ENCODE measurements at regions of chr18 and their contacts with region 1.

Region 1: DNA sequence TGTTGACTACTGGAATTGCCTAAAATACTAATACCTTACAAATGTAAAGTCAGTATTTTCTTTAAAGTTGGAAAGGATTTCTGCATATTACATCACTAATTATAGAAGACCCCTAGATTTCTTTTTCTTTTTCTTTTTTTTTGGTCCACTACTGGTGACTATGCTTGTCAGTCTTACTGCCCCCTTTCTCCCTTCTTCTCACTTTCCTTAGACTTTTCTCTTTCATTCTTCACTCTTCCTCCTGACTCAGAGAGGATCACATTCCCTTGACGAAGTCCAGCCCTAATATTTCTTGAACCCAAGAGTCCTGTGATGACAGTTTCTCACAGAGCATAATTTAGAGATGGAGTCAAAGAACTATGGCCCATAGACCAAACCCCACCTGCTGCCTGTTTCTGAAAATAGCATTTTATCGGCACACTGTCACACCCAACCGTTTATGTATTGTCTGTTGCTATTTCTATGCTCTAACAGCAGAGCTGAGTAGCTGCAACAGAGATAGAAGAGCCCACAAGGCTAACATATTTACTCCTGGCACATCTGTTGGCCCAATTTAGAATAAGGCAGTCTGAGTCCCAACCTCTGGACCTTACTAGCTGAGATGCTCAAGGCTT is 40.6 kb upstream of the RIOK3 start:
- DNase-seq: no peak
- ATAC-seq: no peak
- H3K4me3 ChIP-seq: no peak overlapping the region
- H3K27ac ChIP-seq: no peak overlapping the region
- H3K4me1 ChIP-seq: no peaks in the 10 kb centered on the region
- H3K27me3 ChIP-seq: no peaks in the 10 kb centered on the region
- CTCF ChIP-seq: no peak

Region 2: DNA sequence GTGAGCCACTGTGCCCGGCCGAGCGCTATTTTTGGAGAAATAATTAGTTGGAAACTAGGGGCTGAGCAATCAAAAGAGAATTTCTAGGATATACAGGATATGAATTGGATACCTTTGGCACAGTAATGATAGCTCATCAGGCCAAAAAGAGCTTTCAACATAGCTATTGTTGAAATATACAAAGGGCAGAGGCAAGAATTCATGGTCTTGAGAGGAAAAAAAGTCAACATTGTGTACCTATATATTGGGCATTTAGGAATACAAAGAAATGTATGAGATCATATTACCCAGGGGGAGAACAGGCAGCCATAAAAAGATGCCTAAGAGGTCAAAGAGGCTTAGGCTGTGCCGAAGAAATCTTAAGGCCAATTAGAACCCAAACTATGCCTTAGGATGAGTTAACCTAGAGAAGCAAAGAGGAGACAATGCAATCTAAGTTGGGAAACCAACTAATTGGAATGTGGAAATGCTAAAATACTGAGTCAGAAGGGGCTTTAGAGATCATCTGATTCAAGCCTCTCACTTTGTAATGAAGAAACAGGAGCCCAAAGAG is 380.4 kb before region 1 on chr18:
- CTCF ChIA-PET with region 1: interaction called, 3 read pairs
- POLR2A ChIA-PET with region 1: no interaction called
- intact Hi-C with region 1: loop called (anchors 5 kb)
- DNase-seq: peak; percentile 52
- ATAC-seq: no peak; the same call in 1 of the 2 replicates
- H3K4me3 ChIP-seq: no peak overlapping the region
- H3K27ac ChIP-seq: peak overlapping the region; percentile 23
- H3K4me1 ChIP-seq: peaks cover 17% of the 10 kb centered on the region
- H3K27me3 ChIP-seq: no peaks in the 10 kb centered on the region
- CTCF ChIP-seq: no peak

Region 3: DNA sequence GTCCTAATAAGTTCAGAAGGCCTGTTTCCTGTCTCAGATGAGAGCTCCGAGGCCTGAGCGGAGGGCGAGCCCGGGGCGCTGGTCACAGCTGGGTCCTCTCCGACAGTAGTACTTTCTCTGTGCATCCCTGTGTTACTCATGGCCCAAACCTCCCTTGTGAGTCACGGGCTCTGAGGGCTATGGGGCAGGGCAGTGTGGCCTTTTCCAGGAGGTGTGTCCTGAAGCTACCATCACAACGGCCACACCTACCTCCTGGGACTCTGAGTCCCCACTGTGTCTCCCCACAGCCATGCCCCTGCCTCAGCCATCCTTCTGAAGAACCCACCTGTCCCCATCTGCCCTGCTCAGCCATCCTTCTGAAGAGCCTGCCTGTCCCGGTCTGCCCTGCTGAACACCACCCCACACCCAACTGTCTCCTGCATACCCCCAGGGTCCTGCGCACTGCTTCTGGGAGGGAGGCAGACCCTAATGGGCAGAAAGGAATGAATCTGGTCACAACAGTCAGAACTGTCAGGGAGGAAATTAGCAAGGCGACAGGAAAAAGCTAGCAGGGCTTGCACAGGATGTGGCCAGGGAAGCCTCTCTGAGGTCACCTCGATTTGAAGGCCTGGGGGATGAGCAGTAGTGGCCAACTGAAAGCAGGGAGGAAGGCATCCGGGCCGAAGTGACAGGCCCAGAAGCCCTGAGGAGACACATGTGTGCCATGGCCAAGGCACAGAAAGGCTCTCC is 104.7 kb before region 1 on chr18:
- CTCF ChIA-PET with region 1: no interaction called
- POLR2A ChIA-PET with region 1: no interaction called
- intact Hi-C with region 1: no loop called
- DNase-seq: peak; percentile 32
- ATAC-seq: peak; percentile 16; the same call in 1 of the 2 replicates
- H3K4me3 ChIP-seq: no peak overlapping the region
- H3K27ac ChIP-seq: no peak overlapping the region
- H3K4me1 ChIP-seq: peaks cover 28% of the 10 kb centered on the region
- H3K27me3 ChIP-seq: no peaks in the 10 kb centered on the region
- CTCF ChIP-seq: no peak

Region 4: GRCh38 chr18:23377669-23378301 is 34.7 kb before region 1 on chr18:
- CTCF ChIA-PET with region 1: interaction called, 5 read pairs
- POLR2A ChIA-PET with region 1: no interaction called
- intact Hi-C with region 1: loop called (anchors 5 kb)
- DNase-seq: peak; percentile 89
- ATAC-seq: peak; percentile 65
- H3K4me3 ChIP-seq: peak overlapping the region; percentile 29; the same call in 1 of the 2 replicates
- H3K27ac ChIP-seq: peak overlapping the region; percentile 86
- H3K4me1 ChIP-seq: peaks cover 38% of the 10 kb centered on the region
- H3K27me3 ChIP-seq: no peaks in the 10 kb centered on the region
- CTCF ChIP-seq: no peak

Region 5: GRCh38 chr18:23503038-23503962 is 90.8 kb after region 1 on chr18 and contains the start of gene RMC1:
- CTCF ChIA-PET with region 1: no interaction called
- POLR2A ChIA-PET with region 1: no interaction called
- intact Hi-C with region 1: no loop called
- DNase-seq: peak; percentile 93
- ATAC-seq: peak; percentile 78
- H3K4me3 ChIP-seq: peak within 1 kb of the TSS; percentile 85
- H3K27ac ChIP-seq: peak within 1 kb of the TSS; percentile 44
- H3K4me1 ChIP-seq: peaks cover 20% of the 10 kb centered on the region; the same call in 1 of the 2 replicates
- H3K27me3 ChIP-seq: no peaks in the 10 kb centered on the region
- CTCF ChIP-seq: no peak
- total RNA-seq, gene RMC1: 23.2 and 27.6 TPM in 2 replicates

Region 6: GRCh38 chr18:23943104-23943503 is 530.6 kb after region 1 on chr18:
- CTCF ChIA-PET with region 1: no interaction called
- POLR2A ChIA-PET with region 1: no interaction called
- intact Hi-C with region 1: no loop called
- DNase-seq: no peak
- ATAC-seq: no peak
- H3K4me3 ChIP-seq: no peak overlapping the region
- H3K27ac ChIP-seq: no peak overlapping the region
- H3K4me1 ChIP-seq: no peaks in the 10 kb centered on the region
- H3K27me3 ChIP-seq: no peaks in the 10 kb centered on the region
- CTCF ChIP-seq: no peak